CD4-positive, alpha-beta T cell (primary cell): ENCODE measurements at regions of chr12 and their contacts with region 1.

Region 1: DNA sequence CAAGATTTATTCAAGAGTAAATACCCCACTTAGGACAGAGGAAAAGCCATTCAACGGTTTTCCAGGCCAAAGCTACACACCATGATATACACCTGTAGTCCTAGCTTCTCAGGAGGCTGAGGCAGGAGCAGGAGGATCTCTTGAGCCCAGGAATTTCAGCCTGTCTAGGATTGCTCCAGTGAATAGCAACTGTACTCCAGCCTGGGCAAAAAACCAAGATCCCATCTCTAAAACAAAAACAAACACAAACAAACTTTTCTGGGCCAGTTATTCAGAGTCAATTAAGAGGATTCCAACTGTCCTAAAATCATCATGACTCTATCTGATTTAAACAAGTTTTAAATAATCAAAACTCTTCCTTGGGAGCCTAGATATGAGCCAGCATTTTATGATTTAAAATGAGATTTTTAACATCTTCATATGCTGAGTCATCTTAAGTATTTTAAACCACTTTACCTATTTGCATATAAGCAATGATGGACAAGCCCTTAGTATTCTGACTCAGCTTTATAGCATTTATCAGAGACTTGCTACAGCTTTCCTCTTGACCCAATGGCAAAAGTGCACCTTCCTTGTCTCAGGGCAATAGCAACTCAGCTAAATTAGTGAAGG is 77.1 kb downstream of the KCNMB4 start:
- DNase-seq: no peak
- ATAC-seq: no peak
- H3K4me3 ChIP-seq: no peak overlapping the region
- H3K4me3 Mint-ChIP-seq: no peak overlapping the region
- H3K27ac ChIP-seq: no peak overlapping the region
- H3K27ac Mint-ChIP-seq: no peak overlapping the region
- H3K4me1 ChIP-seq: no peaks in the 10 kb centered on the region
- H3K4me1 Mint-ChIP-seq: no peaks in the 10 kb centered on the region
- H3K27me3 ChIP-seq: no peaks in the 10 kb centered on the region
- H3K27me3 Mint-ChIP-seq: no peaks in the 10 kb centered on the region
- CTCF ChIP-seq: no peak

Region 2: DNA sequence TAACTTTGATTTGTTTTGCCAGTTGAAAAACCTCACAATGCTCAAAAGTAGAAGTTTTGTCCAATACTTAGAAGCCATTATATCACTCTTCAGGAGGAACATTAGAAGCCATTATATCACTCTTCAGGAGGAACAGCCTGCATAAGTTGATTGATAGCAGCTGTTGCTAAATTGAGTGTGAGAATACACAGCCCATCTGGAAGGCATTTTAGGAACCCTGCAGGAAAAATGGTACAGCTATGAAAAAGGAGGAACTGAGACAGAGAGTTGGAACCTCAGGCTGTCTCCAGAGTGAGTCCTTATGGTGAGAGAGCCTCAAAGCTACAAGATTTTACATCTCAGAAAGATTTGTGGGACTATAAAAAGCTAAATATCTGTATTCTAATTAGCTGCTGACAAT is 411.1 kb before region 1 on chr12:
- CTCF ChIA-PET with region 1: no interaction called
- POLR2A ChIA-PET with region 1: no interaction called
- intact Hi-C with region 1: loop called in 1 of 2 experiments (anchors 10 kb)
- DNase-seq: no peak
- ATAC-seq: no peak
- H3K4me3 ChIP-seq: no peak overlapping the region
- H3K4me3 Mint-ChIP-seq: no peak overlapping the region
- H3K27ac ChIP-seq: no peak overlapping the region
- H3K27ac Mint-ChIP-seq: no peak overlapping the region
- H3K4me1 ChIP-seq: no peaks in the 10 kb centered on the region
- H3K4me1 Mint-ChIP-seq: no peaks in the 10 kb centered on the region
- H3K27me3 ChIP-seq: no peaks in the 10 kb centered on the region
- H3K27me3 Mint-ChIP-seq: no peaks in the 10 kb centered on the region
- CTCF ChIP-seq: no peak

Region 3: DNA sequence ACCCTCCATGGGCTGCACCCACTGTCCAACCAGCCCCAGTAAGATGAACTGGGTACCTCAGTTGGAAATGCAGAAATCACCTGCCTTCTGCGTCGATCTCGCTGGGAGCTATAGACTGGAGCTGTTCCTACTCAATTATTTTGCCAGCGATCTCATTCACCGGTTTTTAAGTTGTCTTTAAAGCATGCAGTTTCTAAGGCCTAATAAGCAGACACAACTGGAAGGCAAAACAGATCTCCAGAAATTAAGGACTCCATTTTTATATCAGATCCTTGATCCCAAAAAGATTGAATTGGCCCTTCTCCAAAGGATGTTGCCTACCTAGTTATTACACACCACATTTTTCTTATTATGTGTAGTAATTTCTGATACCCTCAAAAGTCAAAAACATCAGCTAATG is 54.3 kb after region 1 on chr12:
- CTCF ChIA-PET with region 1: no interaction called
- POLR2A ChIA-PET with region 1: no interaction called
- intact Hi-C with region 1: no loop called
- DNase-seq: no peak
- ATAC-seq: no peak
- H3K4me3 ChIP-seq: no peak overlapping the region
- H3K4me3 Mint-ChIP-seq: no peak overlapping the region
- H3K27ac ChIP-seq: no peak overlapping the region
- H3K27ac Mint-ChIP-seq: no peak overlapping the region
- H3K4me1 ChIP-seq: no peaks in the 10 kb centered on the region
- H3K4me1 Mint-ChIP-seq: no peaks in the 10 kb centered on the region
- H3K27me3 ChIP-seq: no peaks in the 10 kb centered on the region
- H3K27me3 Mint-ChIP-seq: peaks cover 5% of the 10 kb centered on the region
- CTCF ChIP-seq: no peak